Left cardiac atrium (tissue), 4 donors: ENCODE measurements at regions of chr17 and their contacts with region 1.

Region 1: GRCh38 chr17:9729034-9729650 is 62.2 kb downstream of the DHRS7C start:
- DNase-seq: no peak
- ATAC-seq: peak; percentile 71 to 74

Region 2: GRCh38 chr17:9768381-9768934 is 39.3 kb after region 1 on chr17:
- intact Hi-C with region 1: loop called in 1 of 2 experiments (anchors 5 kb)
- DNase-seq: no peak
- ATAC-seq: no peak

Region 3: DNA sequence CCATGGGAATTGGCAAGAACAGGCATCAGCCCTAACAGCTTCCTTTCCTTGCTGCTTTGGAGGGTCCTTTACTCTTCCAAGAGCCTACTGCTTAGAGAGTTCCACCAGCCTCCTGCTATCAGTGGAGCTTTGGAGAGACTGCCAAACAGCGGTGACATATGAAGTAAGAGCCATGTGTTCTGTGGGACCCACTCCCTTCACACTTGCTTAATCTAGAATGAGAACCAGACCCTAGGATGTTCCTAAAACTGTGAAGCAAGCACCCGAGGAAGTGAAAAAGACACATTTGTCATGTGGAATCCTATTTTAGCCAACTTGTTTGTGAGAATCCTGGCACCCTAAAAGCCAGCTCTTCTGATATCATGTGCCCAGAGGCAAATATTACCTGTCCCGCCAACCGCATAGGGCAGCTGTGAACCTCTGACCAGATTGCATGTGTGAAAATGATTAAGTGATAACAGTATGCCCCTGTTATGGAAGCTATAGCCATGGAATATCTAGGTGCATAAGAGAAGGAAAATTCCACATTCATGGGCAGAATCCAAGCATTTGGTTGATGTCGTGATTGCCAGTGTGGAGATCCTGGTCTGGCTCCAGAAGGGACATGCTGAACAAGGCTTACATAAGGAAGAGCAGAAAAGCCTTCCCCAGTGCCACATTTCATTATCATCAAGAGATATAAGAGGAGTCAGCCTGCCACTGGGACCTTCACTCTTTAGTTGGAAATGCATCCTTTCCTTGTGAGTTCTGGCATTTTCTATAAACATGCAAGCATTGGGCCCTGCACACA is 157.2 kb after region 1 on chr17:
- intact Hi-C with region 1: loop called in 1 of 2 experiments (anchors 5 kb)
- DNase-seq: no peak
- ATAC-seq: peak in 1 of 2 donors; percentile 54

Region 4: GRCh38 chr17:9924735-9925191 is 195.6 kb after region 1 on chr17:
- intact Hi-C with region 1: loop called (anchors 5 to 10 kb)
- DNase-seq: no peak
- ATAC-seq: peak; percentile 51 to 77